ENCODE measurements at regions of chr16 and their contacts with region 1.

Region 1: DNA sequence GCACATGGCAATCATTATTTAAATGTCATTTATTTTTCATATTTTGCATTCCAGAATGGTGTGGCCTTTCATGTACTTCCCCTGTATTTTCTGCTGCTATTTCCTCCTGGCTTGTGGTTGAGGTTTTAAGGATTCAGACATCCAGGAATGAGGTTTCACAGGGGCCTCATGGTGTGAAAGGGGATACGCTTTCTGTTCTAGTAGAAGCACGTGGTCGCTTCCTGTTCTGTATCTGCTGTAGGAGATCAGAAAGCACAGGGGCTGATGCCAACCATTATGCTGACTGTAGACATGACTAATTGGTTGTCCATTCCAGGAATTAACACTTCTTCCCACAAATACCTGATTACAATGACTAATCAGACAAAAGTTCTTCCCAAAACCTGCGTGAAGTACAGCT is 405.9 kb downstream of the SHISA9 start:
- DNase-seq: peak; percentile 86 to 99
- H3K4me3 ChIP-seq: no peak overlapping the region
- H3K27ac ChIP-seq: peak overlapping the region; percentile 88
- H3K4me1 ChIP-seq: peaks cover 44% of the 10 kb centered on the region
- H3K27me3 ChIP-seq: no peaks in the 10 kb centered on the region
- CTCF ChIP-seq: no peak

Region 2: GRCh38 chr16:12917653-12918052 is 389.6 kb before region 1 on chr16:
- CTCF ChIA-PET with region 1: no interaction called
- POLR2A ChIA-PET with region 1: no interaction called
- intact Hi-C with region 1: loop called (anchors 5 kb)
- DNase-seq: peak; percentile 21 to 55
- H3K4me3 ChIP-seq: no peak overlapping the region
- H3K27ac ChIP-seq: peak overlapping the region; percentile 77
- H3K4me1 ChIP-seq: peaks cover 18% of the 10 kb centered on the region
- H3K27me3 ChIP-seq: no peaks in the 10 kb centered on the region
- CTCF ChIP-seq: no peak

Region 3: GRCh38 chr16:13021996-13022395 is 285.3 kb before region 1 on chr16:
- CTCF ChIA-PET with region 1: no interaction called
- POLR2A ChIA-PET with region 1: no interaction called
- intact Hi-C with region 1: loop called (anchors 5 kb)
- DNase-seq: peak; percentile 62 to 77
- H3K4me3 ChIP-seq: no peak overlapping the region
- H3K27ac ChIP-seq: 0 out of 2 replicates have a peak overlapping the region, but pooled peaks have one; percentile 14
- H3K4me1 ChIP-seq: peaks cover 18% of the 10 kb centered on the region
- H3K27me3 ChIP-seq: no peaks in the 10 kb centered on the region
- CTCF ChIP-seq: no peak

Region 4: GRCh38 chr16:13289515-13289914 is 17.7 kb before region 1 on chr16:
- CTCF ChIA-PET with region 1: no interaction called
- POLR2A ChIA-PET with region 1: no interaction called
- intact Hi-C with region 1: no loop called
- DNase-seq: no peak
- H3K4me3 ChIP-seq: no peak overlapping the region
- H3K27ac ChIP-seq: no peak overlapping the region
- H3K4me1 ChIP-seq: no peaks in the 10 kb centered on the region
- H3K27me3 ChIP-seq: no peaks in the 10 kb centered on the region
- CTCF ChIP-seq: no peak

Region 5: GRCh38 chr16:13436641-13437412 is 129.6 kb after region 1 on chr16:
- CTCF ChIA-PET with region 1: no interaction called
- POLR2A ChIA-PET with region 1: no interaction called
- intact Hi-C with region 1: loop called (anchors 1 kb)
- DNase-seq: peak; percentile 58 to 73
- H3K4me3 ChIP-seq: no peak overlapping the region
- H3K27ac ChIP-seq: no peak overlapping the region
- H3K4me1 ChIP-seq: peaks cover 25% of the 10 kb centered on the region
- H3K27me3 ChIP-seq: no peaks in the 10 kb centered on the region
- CTCF ChIP-seq: no peak